PC-3 (cell line): ENCODE measurements at regions of chr4 and their contacts with region 1.

Region 1: DNA sequence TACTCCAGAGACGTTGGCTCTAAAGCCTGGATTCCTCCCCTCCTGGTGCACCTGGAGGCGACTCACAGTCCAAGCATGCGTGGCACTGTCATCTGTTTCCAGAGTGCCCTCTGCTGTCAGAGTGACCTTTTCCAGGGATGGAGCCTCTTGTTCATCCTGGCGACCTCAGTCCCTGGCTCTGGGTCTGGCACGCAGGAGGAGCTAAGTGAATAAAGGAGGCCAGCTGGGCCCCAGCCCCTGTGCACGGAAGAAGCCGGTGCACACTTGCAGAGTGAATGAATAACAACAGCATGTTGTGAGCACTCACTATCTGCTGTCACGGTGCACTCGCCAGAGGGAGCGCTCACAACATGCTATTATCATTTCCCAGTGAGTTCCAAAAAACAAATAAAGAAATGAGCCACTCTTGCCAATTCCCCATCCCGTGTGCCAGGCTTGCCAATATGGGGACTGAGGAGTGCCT is 27.8 kb upstream of the PSAPL1 start:
- DNase-seq: peak; percentile 88
- ATAC-seq: peak; percentile 97
- H3K4me3 ChIP-seq: no peak overlapping the region
- H3K27ac ChIP-seq: no peak overlapping the region
- H3K4me1 ChIP-seq: peaks cover 14% of the 10 kb centered on the region
- H3K27me3 ChIP-seq: no peaks in the 10 kb centered on the region
- CTCF ChIP-seq: peak; percentile 76

Region 2: GRCh38 chr4:7081891-7082471 is 380.6 kb before region 1 on chr4:
- CTCF ChIA-PET with region 1: no interaction called
- POLR2A ChIA-PET with region 1: no interaction called
- intact Hi-C with region 1: no loop called
- DNase-seq: peak; percentile 83
- ATAC-seq: peak; percentile 95
- H3K4me3 ChIP-seq: no peak overlapping the region
- H3K27ac ChIP-seq: no peak overlapping the region
- H3K4me1 ChIP-seq: 0 out of 2 replicates have a peak, but pooled peaks cover 2% of the 10 kb centered on the region
- H3K27me3 ChIP-seq: no peaks in the 10 kb centered on the region
- CTCF ChIP-seq: peak; percentile 74

Region 3: DNA sequence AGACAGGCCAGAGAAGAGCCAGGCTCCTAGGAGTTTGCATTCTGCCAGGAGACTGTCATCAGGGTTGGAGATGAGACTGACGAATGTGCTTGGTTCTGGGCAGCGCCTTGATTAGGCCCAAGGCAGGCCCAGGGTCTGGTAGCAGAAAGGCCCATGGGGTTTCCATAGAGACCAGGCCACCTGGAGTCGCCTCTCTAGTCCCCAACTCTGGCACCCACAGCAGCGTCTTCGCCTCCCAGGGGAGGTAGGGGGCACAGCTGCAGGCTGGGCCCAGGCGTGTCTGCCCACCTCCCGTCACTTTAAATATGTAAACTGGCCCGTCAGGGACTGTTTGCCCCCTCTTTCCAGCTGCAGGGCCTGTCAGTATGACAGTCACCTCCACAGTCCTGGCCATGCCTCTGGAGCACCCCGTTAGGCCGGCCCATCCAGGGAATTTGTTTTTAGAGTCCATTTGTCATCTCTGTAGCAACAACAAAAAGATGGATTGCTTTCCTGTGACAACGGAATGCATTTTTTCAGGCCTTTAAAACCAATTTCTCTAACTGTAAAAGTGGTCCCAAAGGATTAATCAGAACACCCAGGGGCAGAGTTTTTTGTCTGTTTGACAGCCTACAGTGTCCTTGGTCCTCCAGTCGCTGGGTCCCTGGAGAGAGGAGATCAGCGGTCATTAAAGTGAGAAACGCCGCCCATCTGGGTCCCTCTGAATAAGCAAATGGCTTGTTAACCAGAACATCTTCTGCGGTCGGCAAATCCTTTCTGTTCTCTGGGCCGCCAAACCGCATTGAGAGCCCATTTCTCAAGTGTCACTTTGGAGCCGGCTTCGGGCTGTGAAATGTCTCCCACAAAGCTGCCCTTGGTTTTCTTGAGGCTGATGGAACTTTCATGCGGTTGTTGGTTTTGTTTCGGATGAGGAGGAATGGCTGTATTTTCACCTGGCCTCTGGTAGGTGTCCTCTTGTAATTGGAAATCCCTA is 125.2 kb after region 1 on chr4:
- CTCF ChIA-PET with region 1: no interaction called
- POLR2A ChIA-PET with region 1: no interaction called
- intact Hi-C with region 1: loop called (anchors 2 kb)
- DNase-seq: no peak
- ATAC-seq: no peak
- H3K4me3 ChIP-seq: no peak overlapping the region
- H3K27ac ChIP-seq: no peak overlapping the region
- H3K4me1 ChIP-seq: peaks cover 18% of the 10 kb centered on the region
- H3K27me3 ChIP-seq: no peaks in the 10 kb centered on the region
- CTCF ChIP-seq: no peak

Region 4: DNA sequence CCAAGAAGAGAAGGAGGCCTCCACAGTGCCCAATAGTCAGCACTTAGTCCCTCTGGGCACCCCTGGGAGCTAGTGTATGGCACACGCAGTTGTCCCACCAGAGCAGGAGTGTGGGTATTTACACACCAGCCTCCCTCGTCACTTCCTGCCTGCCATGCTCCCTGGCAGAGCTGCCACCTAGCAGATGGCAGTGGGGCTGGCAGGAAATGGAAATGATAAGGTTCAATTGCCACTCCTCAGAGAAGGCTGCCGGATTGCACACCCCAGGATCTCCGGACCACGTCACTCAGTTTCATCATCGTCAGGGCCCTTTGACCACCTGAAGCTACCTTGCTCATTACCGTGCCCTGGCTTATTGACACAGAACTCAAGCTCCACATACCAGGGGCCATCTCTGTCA is 145.5 kb after region 1 on chr4:
- CTCF ChIA-PET with region 1: no interaction called
- POLR2A ChIA-PET with region 1: no interaction called
- intact Hi-C with region 1: no loop called
- DNase-seq: no peak
- ATAC-seq: no peak
- H3K4me3 ChIP-seq: no peak overlapping the region
- H3K27ac ChIP-seq: no peak overlapping the region
- H3K4me1 ChIP-seq: no peaks in the 10 kb centered on the region
- H3K27me3 ChIP-seq: no peaks in the 10 kb centered on the region
- CTCF ChIP-seq: no peak

Region 5: DNA sequence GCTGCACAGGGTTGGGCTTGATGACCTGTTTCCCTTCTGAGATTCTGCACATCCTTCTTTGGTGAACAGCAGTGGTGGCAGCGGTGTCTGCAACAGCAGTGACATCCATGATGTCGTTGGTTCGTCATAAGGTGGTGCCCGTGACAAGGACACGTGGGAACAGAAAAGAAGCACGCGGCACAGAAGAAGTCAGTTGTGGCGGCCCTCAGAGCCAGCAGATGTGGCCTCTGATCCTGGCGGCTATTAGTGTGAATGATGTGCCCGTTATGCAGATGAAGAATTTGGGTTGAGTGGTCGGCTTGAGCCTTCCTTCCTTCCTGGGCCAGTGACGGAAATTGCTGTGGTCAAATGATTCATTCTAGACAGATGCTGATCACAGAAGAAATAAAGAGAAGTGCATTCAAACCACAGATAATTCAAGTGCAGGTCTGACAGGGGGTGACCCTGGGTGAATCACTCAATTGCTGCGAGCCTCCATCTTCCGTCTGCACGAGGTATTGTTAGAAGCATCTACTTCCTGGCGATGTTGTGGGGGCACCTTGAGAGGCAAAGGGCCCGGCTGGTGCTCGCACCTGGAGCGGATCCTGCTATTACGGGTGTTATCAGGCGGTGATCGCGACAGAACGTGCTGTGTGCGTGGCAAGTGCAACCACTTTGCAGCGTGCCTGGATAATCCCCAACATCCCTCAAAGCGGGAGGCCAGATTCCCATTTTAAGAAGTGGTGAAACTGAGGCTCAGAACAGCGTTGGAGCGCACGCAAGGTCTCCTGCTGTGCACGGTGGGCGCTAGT is 187.4 kb after region 1 on chr4:
- CTCF ChIA-PET with region 1: no interaction called
- POLR2A ChIA-PET with region 1: no interaction called
- intact Hi-C with region 1: loop called (anchors 1 kb)
- DNase-seq: peak; percentile 84
- ATAC-seq: peak; percentile 69
- H3K4me3 ChIP-seq: peak overlapping the region; percentile 9; the same call in 1 of the 2 replicates
- H3K27ac ChIP-seq: peak overlapping the region; percentile 84
- H3K4me1 ChIP-seq: peaks cover 35% of the 10 kb centered on the region
- H3K27me3 ChIP-seq: no peaks in the 10 kb centered on the region
- CTCF ChIP-seq: no peak

Region 6: GRCh38 chr4:7719354-7720174 is 257.0 kb after region 1 on chr4:
- CTCF ChIA-PET with region 1: interaction called, 3 read pairs
- POLR2A ChIA-PET with region 1: no interaction called
- intact Hi-C with region 1: loop called (anchors 1 kb)
- DNase-seq: peak; percentile 54
- ATAC-seq: peak; percentile 77
- H3K4me3 ChIP-seq: peak overlapping the region; percentile 28; the same call in 1 of the 2 replicates
- H3K27ac ChIP-seq: no peak overlapping the region
- H3K4me1 ChIP-seq: 0 out of 2 replicates have a peak, but pooled peaks cover 3% of the 10 kb centered on the region
- H3K27me3 ChIP-seq: no peaks in the 10 kb centered on the region
- CTCF ChIP-seq: peak; percentile 79